ENCODE measurements at regions of chr1 and their contacts with region 1.

Region 1: DNA sequence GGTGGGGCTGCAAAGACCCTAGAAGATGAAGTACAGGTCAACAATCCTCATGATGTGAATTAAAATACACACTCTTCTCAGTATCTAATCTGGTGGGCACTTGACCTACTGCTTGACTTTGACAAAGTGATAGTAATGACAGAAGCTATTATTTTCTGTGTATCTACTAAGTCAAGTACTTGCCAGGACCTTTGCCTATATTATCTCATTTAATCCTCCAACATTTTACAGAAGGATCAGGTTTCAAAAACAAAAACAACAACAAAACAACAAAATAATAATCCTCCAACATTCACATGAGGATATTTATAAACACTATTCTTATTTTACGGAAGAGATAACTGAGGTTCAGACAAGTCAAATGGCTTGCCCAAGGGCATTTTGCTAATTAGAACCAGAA is 4.4 kb upstream of the CD48 start:
- DNase-seq: no peak
- H3K4me3 ChIP-seq: no peak overlapping the region
- H3K27ac ChIP-seq: no peak overlapping the region
- H3K4me1 ChIP-seq: no peaks in the 10 kb centered on the region
- H3K27me3 ChIP-seq: peaks cover 33% of the 10 kb centered on the region; the same call in 1 of the 2 replicates
- CTCF ChIP-seq: no peak
- EP300 ChIP-seq: no peak
- RAD21 ChIP-seq: no peak

Region 2: GRCh38 chr1:160726498-160727315 is 10.7 kb after region 1 on chr1:
- CTCF ChIA-PET with region 1: interaction called, 11 read pairs
- POLR2A ChIA-PET with region 1: no interaction called
- DNase-seq: peak; percentile 40
- H3K4me3 ChIP-seq: peak overlapping the region in 1 of 2 experiments; percentile 17; a peak in 1 of 4 replicates
- H3K27ac ChIP-seq: no peak overlapping the region
- H3K4me1 ChIP-seq: no peaks in the 10 kb centered on the region
- H3K27me3 ChIP-seq: peaks cover 11% of the 10 kb centered on the region
- CTCF ChIP-seq: peak; percentile 81
- EP300 ChIP-seq: no peak
- RAD21 ChIP-seq: peak; percentile 75

Region 3: GRCh38 chr1:160777486-160778089 is 61.6 kb after region 1 on chr1:
- CTCF ChIA-PET with region 1: no interaction called
- POLR2A ChIA-PET with region 1: no interaction called
- DNase-seq: peak; percentile 21
- H3K4me3 ChIP-seq: no peak overlapping the region
- H3K27ac ChIP-seq: no peak overlapping the region
- H3K4me1 ChIP-seq: no peaks in the 10 kb centered on the region
- H3K27me3 ChIP-seq: peaks cover 14% of the 10 kb centered on the region; the same call in 1 of the 2 replicates
- CTCF ChIP-seq: peak; percentile 47
- EP300 ChIP-seq: no peak
- RAD21 ChIP-seq: peak; percentile 36; the same call in 1 of the 2 replicates

Measured in SK-N-SH (cell line).